ENCODE measurements at regions of chr1 and their contacts with region 1.

Region 1: DNA sequence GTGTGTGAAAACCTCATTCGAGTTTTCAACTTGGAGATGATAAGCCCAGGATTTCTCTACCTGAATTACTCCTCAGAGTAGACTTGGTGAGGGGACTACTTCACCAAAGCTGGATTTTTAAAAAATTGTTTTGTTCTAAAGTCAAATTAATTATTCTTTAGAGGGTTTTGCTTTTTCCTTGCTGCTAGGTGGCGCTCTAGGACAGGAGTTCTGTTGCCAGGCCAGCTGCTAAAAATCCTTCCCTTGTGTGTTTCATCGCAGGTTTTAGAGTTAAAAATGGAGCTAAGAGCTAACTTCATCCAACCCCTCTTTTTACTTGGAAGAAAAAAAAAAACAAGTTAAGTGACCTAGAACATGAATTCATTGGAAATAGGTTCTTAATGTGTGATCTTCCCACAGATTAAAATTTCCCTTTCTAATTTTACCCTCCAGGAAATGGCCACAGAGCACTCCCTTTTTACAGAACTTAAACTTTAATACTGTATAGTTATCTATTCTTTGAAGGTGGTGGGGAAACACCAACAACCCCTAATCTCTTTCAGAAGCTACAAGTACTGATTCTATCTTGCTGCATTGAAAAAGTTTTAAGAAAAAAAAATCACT is 36.7 kb upstream of the FAM163A start:
- DNase-seq: peak; percentile 52
- CTCF ChIP-seq: peak; percentile 77

Region 2: DNA sequence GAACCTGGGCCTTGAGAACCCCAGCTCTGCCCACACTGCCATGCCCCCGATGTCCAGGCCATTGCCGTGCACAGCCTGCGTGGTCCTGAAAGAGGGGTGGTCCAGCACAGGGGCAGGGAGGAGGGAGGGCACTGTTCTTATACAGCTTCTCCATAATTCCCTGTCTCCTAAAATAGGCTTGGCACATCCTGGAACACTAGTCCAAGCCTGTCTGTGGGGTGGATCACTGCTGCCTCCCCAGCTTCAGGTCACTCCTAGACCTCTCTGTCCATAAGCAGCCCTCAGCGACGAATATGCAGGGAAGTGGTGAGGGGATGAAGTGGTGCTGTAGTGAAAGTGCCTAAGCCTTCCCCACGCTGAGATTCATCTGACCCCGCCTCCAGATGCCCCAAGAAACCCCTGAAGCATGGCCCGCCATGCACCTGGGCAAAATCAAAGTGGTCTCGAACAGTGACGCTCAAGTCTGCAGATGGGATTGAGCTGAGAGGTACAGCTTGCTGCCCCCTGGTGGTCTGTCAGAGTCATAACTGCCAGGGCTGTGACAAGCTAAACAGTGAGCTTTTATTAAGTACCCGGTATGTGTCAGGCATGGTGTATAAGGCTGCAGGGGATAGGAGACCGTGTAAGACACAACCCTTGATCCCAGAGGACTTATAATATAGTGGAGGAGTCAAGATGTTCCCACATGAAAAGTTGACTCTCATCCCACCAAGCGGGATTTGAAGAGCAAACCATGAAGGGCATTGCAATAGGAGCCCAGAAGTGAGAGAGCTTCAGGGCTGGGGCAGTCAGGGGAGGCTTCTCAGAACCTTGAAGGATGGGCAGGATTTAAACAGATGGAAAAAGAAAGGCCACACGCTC is 103.3 kb after region 1 on chr1:
- in situ Hi-C with region 1: loop called (anchors 10 kb)
- DNase-seq: peak; percentile 80
- CTCF ChIP-seq: peak; percentile 91

Region 3: DNA sequence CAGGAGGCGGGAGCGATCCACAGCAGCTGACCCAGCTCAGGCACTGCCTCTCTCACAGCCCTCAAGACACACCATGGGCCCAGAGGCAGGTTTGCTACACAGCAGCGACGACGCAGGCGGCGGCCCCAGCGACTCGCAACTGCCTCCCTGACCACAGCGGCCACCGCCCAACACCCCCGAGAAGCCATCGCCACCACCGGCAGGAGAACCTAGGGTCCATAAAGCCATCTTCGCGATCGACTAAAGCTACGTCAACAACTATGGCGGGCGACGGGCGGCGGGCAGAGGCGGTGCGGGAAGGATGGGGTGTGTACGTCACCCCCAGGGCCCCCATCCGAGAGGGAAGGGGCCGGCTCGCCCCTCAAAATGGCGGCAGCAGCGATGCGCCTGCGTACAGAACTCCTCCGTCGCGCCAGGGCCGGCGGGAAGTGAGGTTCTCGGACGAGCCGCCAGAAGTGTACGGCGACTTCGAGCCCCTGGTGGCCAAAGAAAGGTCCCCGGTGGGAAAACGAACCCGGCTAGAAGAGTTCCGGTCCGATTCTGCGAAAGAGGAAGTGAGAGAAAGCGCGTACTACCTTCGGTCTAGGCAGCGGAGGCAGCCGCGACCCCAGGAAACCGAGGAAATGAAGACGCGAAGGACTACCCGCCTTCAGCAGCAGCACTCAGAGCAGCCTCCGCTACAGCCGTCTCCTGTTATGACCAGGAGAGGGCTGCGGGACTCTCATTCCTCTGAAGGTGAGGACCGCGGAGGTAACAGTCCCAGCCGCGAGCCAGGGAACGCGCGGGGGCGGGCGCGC is 176.0 kb after region 1 on chr1 and contains the start of gene TOR1AIP1:
- in situ Hi-C with region 1: no loop called
- DNase-seq: peak; percentile 88
- CTCF ChIP-seq: peak; percentile 24

Region 4: DNA sequence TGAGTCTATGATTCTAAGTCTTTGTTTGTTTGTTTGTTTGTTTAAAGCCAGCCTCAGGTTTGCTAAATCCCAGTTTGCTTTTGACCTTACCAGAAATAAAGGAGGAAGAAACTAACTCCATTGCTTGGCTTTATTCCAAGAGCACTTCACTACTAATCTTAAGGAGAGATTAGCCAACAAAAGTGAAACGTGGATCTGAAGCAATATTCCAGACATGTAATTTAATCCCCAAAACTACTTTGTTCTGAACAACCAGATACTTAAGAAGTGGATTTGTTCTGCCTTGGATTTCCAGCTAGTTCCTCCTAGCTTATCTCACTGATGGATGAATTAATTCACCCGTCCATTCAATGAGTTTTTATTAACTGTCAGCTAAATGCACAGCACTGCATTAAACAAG is 232.3 kb after region 1 on chr1:
- in situ Hi-C with region 1: no loop called
- DNase-seq: no peak
- CTCF ChIP-seq: no peak

Region 5: DNA sequence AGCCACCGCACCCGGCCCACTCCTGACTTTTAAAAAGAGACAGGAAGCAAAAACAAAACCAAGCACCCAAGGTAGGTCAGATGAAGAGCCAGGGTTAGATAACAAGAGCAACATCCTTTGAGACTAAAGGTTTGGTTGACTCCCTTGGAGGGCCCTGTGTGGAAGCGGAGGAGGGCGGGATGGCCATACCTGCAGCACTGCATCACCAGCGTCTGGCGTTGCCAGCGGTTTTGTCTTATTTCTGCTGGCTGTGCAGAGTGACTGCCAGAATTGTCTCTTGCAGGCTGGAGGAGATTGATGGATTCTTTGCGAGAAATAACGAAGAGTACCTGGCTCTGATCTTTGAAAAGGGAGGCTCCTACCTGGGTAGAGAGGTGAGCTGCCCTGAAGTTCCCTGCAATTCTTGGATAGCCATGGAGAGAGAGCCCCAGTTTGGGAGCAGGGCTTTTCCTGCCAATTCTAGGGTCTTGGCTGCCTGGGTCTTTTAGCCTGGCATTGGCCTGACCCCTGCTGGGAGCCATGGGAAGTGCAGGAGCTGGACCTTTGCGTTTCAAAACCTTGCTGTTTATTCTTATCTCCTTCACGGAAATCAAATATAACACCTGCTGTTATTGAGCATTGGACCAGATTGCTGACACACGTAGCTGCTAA is 472.2 kb after region 1 on chr1:
- in situ Hi-C with region 1: loop called (anchors 25 kb)
- DNase-seq: peak; percentile 86
- CTCF ChIP-seq: peak; percentile 90

Measured in GM13977 (cell line).